ENCODE measurements at regions of chr14 and their contacts with region 1.

Region 1: DNA sequence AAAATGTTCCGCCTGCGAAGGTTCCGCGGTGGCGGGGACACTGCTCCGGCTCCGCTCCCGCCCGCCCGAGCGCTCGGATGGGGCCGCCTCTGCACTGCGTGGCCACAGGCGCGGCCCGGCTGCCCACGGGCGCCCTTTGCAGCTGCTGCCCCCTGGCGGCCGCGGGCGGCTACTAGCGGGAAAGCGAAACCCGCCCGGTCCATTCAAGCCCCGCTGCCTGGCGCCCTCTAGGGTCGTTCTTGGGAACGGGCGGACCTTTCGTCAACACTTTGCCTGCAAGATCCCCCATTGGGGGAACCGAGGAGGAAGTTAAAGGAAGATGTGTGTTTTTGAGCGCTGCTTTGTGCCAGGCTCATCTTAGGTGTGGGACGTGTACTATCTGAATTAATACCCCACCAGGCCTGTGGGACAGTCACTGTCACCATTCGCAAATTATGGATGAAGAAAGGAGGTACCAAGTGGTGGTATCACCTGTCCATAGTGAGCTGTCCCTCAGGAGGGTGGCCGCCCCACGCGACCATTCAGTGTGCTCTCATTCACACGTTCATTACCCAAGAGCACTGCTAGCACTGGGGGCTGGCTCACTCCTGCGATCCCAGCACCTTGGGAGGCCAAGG is 19.4 kb downstream of the GPR132 start:
- DNase-seq: peak; percentile 94
- H3K4me3 Mint-ChIP-seq: no peak overlapping the region
- H3K27ac Mint-ChIP-seq: peak overlapping the region; percentile 23
- H3K4me1 Mint-ChIP-seq: peaks cover 15% of the 10 kb centered on the region
- H3K27me3 Mint-ChIP-seq: peaks cover 9% of the 10 kb centered on the region

Region 2: DNA sequence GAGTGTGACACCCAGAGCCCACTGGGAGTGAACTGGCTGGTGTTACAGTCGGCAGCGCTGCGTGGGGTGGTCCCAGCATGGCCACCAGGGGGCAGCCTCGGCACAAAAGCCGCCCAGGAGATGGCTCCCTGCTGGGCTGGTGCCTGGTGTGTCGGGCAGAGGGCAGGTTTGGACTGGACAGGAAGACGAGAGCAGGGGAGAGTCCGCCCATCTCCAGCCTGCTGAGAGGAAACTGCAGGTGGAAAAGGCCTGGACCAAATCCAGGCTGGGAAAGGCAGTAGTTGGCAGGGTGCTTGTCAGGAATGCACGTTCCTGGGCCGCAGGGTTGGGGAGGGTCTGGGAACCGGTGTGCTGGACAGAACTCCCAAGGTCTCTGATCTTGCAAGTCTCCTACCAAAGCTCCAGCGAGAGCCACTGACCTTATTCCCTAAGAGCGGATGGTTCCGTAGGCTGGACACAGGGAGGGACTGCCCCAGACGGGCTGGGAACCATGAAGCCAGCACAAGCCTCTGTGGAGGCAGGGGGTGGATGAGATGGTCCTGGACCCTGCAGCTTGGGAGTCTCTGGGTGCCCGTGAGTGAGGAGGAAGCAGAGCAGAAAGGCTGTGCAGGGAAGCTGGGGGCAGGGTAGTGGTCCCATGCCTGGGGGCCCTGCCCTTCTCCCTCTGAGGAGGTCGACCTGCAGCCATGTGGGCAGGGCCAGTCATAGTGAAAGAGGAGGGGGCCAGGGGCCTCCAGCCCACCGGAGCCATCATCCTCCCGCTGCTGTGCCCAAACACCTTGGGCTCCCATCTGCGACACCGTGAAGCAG is 69.4 kb before region 1 on chr14:
- CTCF ChIA-PET with region 1: interaction called, 108 read pairs
- POLR2A ChIA-PET with region 1: interaction called, 6 read pairs
- intact Hi-C with region 1: loop called (anchors 1 kb)
- DNase-seq: peak; percentile 91
- H3K4me3 Mint-ChIP-seq: peak overlapping the region; percentile 34
- H3K27ac Mint-ChIP-seq: peak overlapping the region; percentile 39
- H3K4me1 Mint-ChIP-seq: peaks cover 10% of the 10 kb centered on the region
- H3K27me3 Mint-ChIP-seq: peaks cover 25% of the 10 kb centered on the region

Region 3: DNA sequence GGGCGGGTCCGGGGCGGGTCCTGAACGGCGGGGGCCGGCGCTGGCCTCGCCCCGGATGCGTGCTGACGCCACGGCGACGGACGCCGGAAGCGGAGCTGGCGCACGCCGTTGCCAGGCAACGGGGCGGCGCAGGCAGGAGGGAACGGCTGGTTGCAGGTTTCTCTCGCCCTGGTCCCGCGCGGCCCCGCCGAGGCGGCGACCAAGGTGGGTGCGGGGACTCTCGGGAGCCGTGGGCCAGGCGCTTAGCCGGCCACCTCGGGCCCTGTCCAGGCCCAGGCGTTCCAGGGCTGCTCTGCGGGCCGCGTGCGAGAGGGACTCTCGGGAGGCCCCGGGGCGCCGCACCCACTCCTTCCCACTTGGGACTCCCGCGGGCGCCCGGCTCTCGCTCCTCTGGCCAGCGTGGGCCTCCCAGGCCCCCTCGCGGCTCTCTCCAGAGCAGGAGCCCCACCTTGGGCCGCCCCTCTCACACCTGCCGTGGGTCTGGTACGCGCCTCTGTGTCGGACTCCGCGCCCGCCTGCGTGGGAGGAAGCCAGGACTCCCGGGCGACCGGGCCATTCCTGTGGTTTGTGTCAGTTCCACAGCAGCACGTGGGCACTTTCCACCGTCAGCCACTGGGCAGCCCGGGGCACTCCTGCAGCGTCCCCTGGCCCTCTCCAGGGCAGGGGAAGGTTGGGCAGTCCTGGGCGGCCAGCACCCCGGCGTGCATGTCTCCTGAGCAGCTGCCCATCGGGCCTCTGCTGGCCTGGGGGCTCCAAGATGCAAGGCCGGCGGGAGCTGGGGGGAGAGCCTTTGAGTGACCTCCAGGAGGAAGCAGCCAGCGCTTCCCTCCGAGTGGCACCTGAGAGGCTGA is 59.9 kb before region 1 on chr14 and contains the start of gene CLBA1:
- CTCF ChIA-PET with region 1: interaction called, 20 read pairs
- POLR2A ChIA-PET with region 1: interaction called, 3 read pairs
- intact Hi-C with region 1: no loop called
- DNase-seq: peak; percentile 91
- H3K4me3 Mint-ChIP-seq: peak within 1 kb of the TSS; percentile 59
- H3K27ac Mint-ChIP-seq: no peak within 1 kb of the TSS
- H3K4me1 Mint-ChIP-seq: peaks cover 9% of the 10 kb centered on the region
- H3K27me3 Mint-ChIP-seq: peaks cover 2% of the 10 kb centered on the region
- total RNA-seq, gene CLBA1: 0.78 to 1.2 TPM

Region 4: DNA sequence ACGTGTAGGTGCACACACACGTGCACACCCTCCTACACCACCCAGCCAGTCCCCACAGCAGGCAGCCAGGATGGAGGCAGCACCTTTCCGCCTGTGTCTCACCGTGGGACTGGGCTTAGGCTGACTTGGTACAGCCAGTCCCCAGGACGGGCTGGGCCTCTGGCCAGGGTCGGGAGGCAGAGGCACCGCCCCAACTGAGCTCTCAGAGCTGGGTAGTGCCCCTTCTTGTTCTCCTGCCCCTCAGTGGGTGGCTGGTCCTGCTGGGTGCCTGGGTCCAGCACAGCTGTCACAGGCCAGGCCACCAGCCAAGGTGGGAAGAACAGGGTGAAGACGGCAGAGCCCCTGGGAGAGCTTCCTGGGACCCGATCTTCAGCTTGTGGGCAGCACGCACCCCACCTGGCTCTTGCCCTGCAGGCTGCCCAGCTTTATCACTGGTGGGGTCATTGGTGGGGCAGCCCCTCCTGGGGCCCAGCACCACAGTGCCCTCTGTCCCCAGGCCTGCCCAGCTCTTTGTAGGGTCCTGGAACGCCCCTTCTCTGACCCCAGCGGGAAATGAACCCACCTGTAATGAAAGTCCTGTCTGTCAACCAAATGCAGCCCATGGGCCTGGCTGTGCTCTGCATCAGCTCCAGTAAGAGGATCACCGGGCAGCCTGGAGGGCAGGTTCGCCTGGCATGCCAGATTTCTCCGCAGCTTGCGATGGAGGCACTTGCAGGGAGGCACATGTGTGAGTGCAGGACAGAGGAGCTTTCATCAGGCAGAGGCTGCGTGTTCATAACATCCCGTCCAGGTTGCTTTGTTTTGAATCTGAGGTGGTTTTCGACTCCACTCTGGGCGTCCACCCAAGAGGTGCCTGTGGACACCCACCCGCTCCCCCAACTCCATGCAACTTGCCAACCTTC is 39.6 kb before region 1 on chr14:
- CTCF ChIA-PET with region 1: interaction called, 27 read pairs
- POLR2A ChIA-PET with region 1: interaction called, 5 read pairs
- intact Hi-C with region 1: no loop called
- DNase-seq: no peak
- H3K4me3 Mint-ChIP-seq: no peak overlapping the region
- H3K27ac Mint-ChIP-seq: no peak overlapping the region
- H3K4me1 Mint-ChIP-seq: peaks cover 2% of the 10 kb centered on the region
- H3K27me3 Mint-ChIP-seq: no peaks in the 10 kb centered on the region

Region 5: DNA sequence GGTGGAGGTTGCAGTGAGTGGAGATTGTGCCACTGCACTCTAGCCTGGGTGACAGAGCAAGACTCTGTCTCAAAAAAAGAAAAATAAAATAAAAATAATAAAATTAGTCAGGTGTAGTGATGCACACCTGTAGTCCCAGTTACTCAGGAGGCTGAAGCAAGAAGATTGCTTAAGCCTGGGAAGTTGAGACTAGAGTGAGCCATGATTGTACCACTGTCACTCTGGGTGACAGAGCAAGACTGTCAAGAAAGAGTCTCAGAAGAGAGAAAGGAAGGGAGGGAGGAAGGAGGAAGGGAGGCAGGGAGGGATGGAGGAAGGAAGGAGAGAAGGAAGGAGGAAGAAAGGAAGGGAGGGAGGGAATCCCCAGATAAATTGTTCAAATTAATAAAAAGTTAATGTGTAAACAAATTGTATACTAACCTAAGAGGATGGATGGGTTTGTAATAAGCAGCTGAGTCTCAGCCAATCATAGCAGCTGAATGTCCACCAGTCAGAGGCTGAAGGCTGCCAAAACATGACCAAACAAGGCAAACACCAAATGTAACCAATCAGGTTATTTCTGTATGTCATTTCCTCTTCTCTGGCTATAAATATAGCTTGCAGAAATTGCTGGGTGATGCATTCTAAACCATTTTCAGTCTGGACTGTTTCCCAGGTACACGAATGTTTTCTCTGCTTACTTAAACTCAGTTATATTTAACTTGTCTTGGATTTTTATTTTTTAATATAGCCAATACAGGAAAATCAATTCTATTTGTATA is 18.8 kb before region 1 on chr14:
- CTCF ChIA-PET with region 1: interaction called, 75 read pairs
- POLR2A ChIA-PET with region 1: interaction called, 3 read pairs
- intact Hi-C with region 1: no loop called
- DNase-seq: no peak
- H3K4me3 Mint-ChIP-seq: no peak overlapping the region
- H3K27ac Mint-ChIP-seq: no peak overlapping the region
- H3K4me1 Mint-ChIP-seq: peaks cover 43% of the 10 kb centered on the region
- H3K27me3 Mint-ChIP-seq: no peaks in the 10 kb centered on the region

Region 6: GRCh38 chr14:105059035-105059924 is 13.5 kb after region 1 on chr14:
- CTCF ChIA-PET with region 1: interaction called, 29 read pairs
- POLR2A ChIA-PET with region 1: interaction called, 5 read pairs
- intact Hi-C with region 1: no loop called
- DNase-seq: peak; percentile 81
- H3K4me3 Mint-ChIP-seq: peak overlapping the region; percentile 94
- H3K27ac Mint-ChIP-seq: peak overlapping the region; percentile 89
- H3K4me1 Mint-ChIP-seq: peaks cover 46% of the 10 kb centered on the region
- H3K27me3 Mint-ChIP-seq: no peaks in the 10 kb centered on the region

Region 7: GRCh38 chr14:105340821-105341733 is 295.3 kb after region 1 on chr14:
- CTCF ChIA-PET with region 1: no interaction called
- POLR2A ChIA-PET with region 1: no interaction called
- intact Hi-C with region 1: no loop called
- DNase-seq: no peak
- H3K4me3 Mint-ChIP-seq: no peak overlapping the region
- H3K27ac Mint-ChIP-seq: no peak overlapping the region
- H3K4me1 Mint-ChIP-seq: no peaks in the 10 kb centered on the region
- H3K27me3 Mint-ChIP-seq: no peaks in the 10 kb centered on the region

Measured in activated CD4-positive, alpha-beta memory T cell treated with anti-CD3 and anti-CD28 coated beads for 36 hours (primary cell).